HEK293 (cell line): ENCODE measurements at regions of chr7 and their contacts with region 1.

Region 1: GRCh38 chr7:34584526-34584925 is 73.5 kb upstream of the NPSR1 start:
- H3K4me3 ChIP-seq: no peak overlapping the region
- H3K27ac ChIP-seq: no peak overlapping the region
- H3K4me1 ChIP-seq: no peaks in the 10 kb centered on the region
- CTCF ChIP-seq: no peak

Region 2: GRCh38 chr7:34457329-34457728 is 127.2 kb before region 1 on chr7:
- CTCF ChIA-PET with region 1: no interaction called
- POLR2A ChIA-PET with region 1: no interaction called
- H3K4me3 ChIP-seq: no peak overlapping the region
- H3K27ac ChIP-seq: no peak overlapping the region
- H3K4me1 ChIP-seq: no peaks in the 10 kb centered on the region
- CTCF ChIP-seq: no peak

Region 3: GRCh38 chr7:34596892-34597291 is 12.4 kb after region 1 on chr7:
- CTCF ChIA-PET with region 1: interaction called, 10 read pairs
- POLR2A ChIA-PET with region 1: no interaction called
- H3K4me3 ChIP-seq: no peak overlapping the region
- H3K27ac ChIP-seq: no peak overlapping the region
- H3K4me1 ChIP-seq: no peaks in the 10 kb centered on the region
- CTCF ChIP-seq: no peak

Region 4: GRCh38 chr7:34682089-34682488 is 97.6 kb after region 1 on chr7:
- CTCF ChIA-PET with region 1: no interaction called
- POLR2A ChIA-PET with region 1: no interaction called
- H3K4me3 ChIP-seq: no peak overlapping the region
- H3K27ac ChIP-seq: no peak overlapping the region
- H3K4me1 ChIP-seq: no peaks in the 10 kb centered on the region
- CTCF ChIP-seq: no peak